ENCODE measurements at regions of chr6 and their contacts with region 1.

Region 1: DNA sequence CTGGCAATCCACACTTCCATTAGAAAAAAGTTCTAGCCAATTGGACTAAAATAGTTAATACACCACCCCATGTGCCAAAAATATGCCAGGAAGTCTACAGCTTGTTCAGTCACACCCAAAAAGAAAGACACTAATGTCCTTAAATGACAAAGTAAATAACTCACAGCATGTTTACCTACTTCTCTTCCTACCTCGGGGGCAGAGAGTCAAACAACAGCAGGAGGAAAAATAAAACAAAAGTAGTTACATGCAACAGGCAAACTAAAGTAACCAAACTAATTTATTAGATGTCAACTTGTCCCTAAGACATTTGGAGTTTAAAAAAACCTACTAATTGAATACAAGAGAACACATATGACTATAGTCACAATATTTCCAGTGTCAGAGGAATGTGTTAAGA is 57.0 kb downstream of the UBE3D start:
- DNase-seq: no peak

Region 2: GRCh38 chr6:82995066-82995465 is 13.6 kb before region 1 on chr6:
- intact Hi-C with region 1: loop called in 1 of 2 experiments (anchors 1 kb)
- DNase-seq: no peak

Measured in posterior vena cava (tissue), 2 donors.